BJ (cell line): ENCODE measurements at regions of chr17 and their contacts with region 1.

Region 1: GRCh38 chr17:44878627-44879221 is 20.5 kb downstream of the EFTUD2 start:
- DNase-seq: no peak
- H3K4me3 ChIP-seq: no peak overlapping the region
- H3K27me3 ChIP-seq: no peaks in the 10 kb centered on the region
- CTCF ChIP-seq: peak; percentile 67

Region 2: GRCh38 chr17:44844390-44844830 is 34.3 kb before region 1 on chr17:
- CTCF ChIA-PET with region 1: interaction called, 11 read pairs
- POLR2A ChIA-PET with region 1: no interaction called
- DNase-seq: no peak
- H3K4me3 ChIP-seq: no peak overlapping the region
- H3K27me3 ChIP-seq: no peaks in the 10 kb centered on the region
- CTCF ChIP-seq: peak; percentile 18; the same call in 1 of the 2 replicates

Region 3: DNA sequence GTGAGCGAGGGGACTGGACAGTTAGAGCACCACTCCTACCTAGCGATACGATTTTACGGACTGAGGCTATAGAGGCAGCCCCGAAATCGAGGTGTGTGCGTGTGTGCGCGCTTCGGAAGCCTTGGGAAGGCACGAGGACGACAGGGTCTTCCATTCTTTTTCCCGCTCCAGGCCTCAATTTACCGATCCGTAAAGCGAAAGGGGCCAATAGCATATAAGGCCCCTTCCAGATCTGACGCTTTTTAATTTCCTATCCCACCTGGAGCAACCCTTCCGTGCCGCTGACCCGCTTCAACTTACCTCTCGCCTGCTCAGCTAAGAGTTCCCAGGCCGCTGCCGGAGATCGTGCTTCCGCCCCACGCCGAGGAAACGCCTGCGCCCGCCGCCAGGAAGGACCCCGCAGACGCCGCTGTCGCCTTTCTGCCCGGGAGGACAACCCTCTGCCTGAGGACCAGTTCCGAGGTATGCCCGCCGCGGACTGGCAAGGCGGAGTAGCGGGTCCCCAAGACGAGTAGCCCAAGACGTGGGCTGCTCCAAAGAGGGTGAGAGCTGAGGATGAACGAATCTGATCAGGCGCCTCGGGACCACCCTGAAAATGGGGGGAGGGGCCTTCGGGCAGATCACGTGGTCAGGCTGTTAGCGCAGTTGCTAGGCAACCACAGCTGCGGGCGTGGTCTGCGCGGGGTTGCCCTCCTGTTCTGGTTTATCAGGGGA is 20.5 kb after region 1 on chr17 and contains the start of gene EFTUD2:
- CTCF ChIA-PET with region 1: interaction called, 23 read pairs
- POLR2A ChIA-PET with region 1: no interaction called
- DNase-seq: no peak
- H3K4me3 ChIP-seq: peak within 1 kb of the TSS; percentile 84
- H3K27me3 ChIP-seq: no peaks in the 10 kb centered on the region
- CTCF ChIP-seq: no peak
- polyA plus RNA-seq, gene EFTUD2: 72.0 and 121 TPM in 2 replicates

Region 4: GRCh38 chr17:45149037-45149668 is 270.4 kb after region 1 on chr17:
- CTCF ChIA-PET with region 1: no interaction called
- POLR2A ChIA-PET with region 1: no interaction called
- DNase-seq: peak; percentile 30
- H3K4me3 ChIP-seq: peak overlapping the region; percentile 91
- H3K27me3 ChIP-seq: no peaks in the 10 kb centered on the region
- CTCF ChIP-seq: peak; percentile 93